ENCODE measurements at regions of chr5 and their contacts with region 1.

Region 1: DNA sequence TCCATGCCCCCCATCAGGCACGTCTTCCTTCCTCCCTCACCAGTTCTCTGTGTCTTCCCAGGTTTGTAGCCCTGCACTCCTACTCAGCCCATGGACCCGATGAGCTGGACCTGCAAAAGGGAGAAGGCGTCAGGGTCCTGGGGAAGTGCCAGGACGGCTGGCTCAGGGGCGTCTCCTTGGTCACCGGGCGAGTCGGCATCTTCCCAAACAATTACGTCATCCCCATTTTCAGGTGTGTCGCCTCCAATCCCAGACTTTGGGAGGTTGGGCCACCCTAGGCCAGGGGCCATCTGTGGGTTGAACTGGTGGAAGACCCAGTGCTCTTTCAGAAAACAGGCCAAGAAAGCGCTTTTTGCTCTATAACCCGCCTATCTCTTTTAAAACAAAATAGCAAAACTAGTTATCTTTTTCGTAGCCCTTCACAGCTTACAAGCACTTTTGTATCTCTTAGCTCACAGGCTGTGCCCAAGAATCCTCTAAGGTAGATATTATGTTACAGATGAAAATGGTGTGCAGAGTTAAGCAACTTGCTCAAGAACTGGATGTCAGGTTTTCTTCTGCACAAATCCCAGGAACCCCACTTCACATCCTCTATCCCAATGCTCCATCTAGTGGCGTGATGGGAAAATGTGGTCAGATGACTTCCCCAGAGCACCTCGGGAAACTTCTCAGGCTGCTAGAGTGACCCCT is 56.2 kb downstream of the PLAC8L1 start:
- DNase-seq: no peak
- H3K4me3 Mint-ChIP-seq: no peak overlapping the region
- H3K27ac Mint-ChIP-seq: no peak overlapping the region
- H3K4me1 Mint-ChIP-seq: no peaks in the 10 kb centered on the region
- H3K27me3 Mint-ChIP-seq: peaks cover 18% of the 10 kb centered on the region

Region 2: DNA sequence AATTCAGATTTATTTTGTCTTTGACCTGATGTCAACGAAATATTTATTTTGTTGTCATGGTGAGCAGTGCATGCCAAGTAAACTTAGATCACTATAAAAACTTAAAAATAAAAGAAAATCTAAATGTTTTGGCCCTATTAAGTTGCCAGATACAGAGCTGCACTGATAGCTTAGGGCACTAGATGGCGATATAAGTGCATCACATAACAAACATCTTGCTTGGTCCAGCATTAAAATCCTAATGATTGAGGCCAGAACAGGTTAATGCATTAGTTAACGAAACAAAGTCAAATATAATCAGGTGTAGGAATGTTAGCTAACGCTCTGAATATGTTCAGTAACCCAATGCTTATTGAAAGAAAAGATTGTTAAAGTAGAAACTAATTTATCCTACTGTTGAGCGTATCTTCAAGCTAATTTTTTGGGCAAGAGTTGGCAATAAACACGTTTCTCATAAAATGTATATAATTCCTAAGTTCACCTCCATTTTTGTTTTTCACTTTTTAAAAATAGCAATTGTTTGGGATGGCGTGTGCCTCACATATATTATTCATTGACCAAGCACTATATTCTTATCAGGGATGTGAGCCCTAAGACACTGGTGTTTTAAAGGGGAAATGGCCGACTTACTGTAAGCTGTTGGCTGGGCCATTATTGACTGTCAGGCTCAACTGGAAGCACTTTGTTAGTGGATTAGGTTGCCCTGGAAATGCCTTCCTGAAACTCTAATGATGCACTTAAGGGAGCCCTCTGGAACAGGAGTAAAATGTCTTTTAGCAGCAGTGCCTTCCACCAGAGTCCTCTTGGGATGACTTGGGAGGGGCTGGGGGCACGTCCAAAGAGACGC is 1845.2 kb before region 1 on chr5:
- intact Hi-C with region 1: loop called (anchors 10 kb)
- DNase-seq: no peak
- H3K4me3 Mint-ChIP-seq: no peak overlapping the region
- H3K27ac Mint-ChIP-seq: no peak overlapping the region
- H3K4me1 Mint-ChIP-seq: no peaks in the 10 kb centered on the region
- H3K27me3 Mint-ChIP-seq: peaks cover 48% of the 10 kb centered on the region

Region 3: GRCh38 chr5:145681686-145682085 is 367.5 kb before region 1 on chr5:
- intact Hi-C with region 1: loop called (anchors 2 kb)
- DNase-seq: peak; percentile 2
- H3K4me3 Mint-ChIP-seq: no peak overlapping the region
- H3K27ac Mint-ChIP-seq: no peak overlapping the region
- H3K4me1 Mint-ChIP-seq: no peaks in the 10 kb centered on the region
- H3K27me3 Mint-ChIP-seq: peaks cover 2% of the 10 kb centered on the region

Region 4: GRCh38 chr5:145697251-145697990 is 351.7 kb before region 1 on chr5:
- intact Hi-C with region 1: loop called (anchors 2 kb)
- DNase-seq: no peak
- H3K4me3 Mint-ChIP-seq: no peak overlapping the region
- H3K27ac Mint-ChIP-seq: no peak overlapping the region
- H3K4me1 Mint-ChIP-seq: no peaks in the 10 kb centered on the region
- H3K27me3 Mint-ChIP-seq: no peaks in the 10 kb centered on the region

Region 5: GRCh38 chr5:145902418-145902817 is 146.7 kb before region 1 on chr5:
- intact Hi-C with region 1: no loop called
- DNase-seq: no peak
- H3K4me3 Mint-ChIP-seq: no peak overlapping the region
- H3K27ac Mint-ChIP-seq: no peak overlapping the region
- H3K4me1 Mint-ChIP-seq: no peaks in the 10 kb centered on the region
- H3K27me3 Mint-ChIP-seq: peaks cover 9% of the 10 kb centered on the region

Region 6: GRCh38 chr5:146103594-146103993 is 54.4 kb after region 1 on chr5:
- intact Hi-C with region 1: no loop called
- DNase-seq: no peak
- H3K4me3 Mint-ChIP-seq: no peak overlapping the region
- H3K27ac Mint-ChIP-seq: no peak overlapping the region
- H3K4me1 Mint-ChIP-seq: no peaks in the 10 kb centered on the region
- H3K27me3 Mint-ChIP-seq: no peaks in the 10 kb centered on the region

Measured in activated T-helper 1 cell treated with anti-CD3 and anti-CD28 coated beads, Interleukin-12 subunit alpha, Interleukin-12 subunit beta, Interleukin-2, Interleukin-4 antibody, amounts not matched to agents 30 ng/mL and 10 ng/mL and 1 ng/mL, durations not matched to agents 14 hours and 24 hours and 36 hours (primary cell).